Calu3 (cell line): ENCODE measurements at regions of chr1 and their contacts with region 1.

Region 1: GRCh38 chr1:87787551-87787950 is 458.9 kb downstream of the LMO4 start:
- DNase-seq: no peak
- H3K4me3 Mint-ChIP-seq: no peak overlapping the region
- H3K27ac Mint-ChIP-seq: peak overlapping the region; percentile 47
- H3K4me1 Mint-ChIP-seq: peaks cover 70% of the 10 kb centered on the region
- H3K27me3 Mint-ChIP-seq: no peaks in the 10 kb centered on the region
- CTCF ChIP-seq: peak; percentile 37

Region 2: GRCh38 chr1:87754036-87754603 is 33.4 kb before region 1 on chr1:
- CTCF ChIA-PET with region 1: no interaction called
- intact Hi-C with region 1: no loop called
- DNase-seq: no peak
- H3K4me3 Mint-ChIP-seq: no peak overlapping the region
- H3K27ac Mint-ChIP-seq: no peak overlapping the region
- H3K4me1 Mint-ChIP-seq: peaks cover 9% of the 10 kb centered on the region
- H3K27me3 Mint-ChIP-seq: no peaks in the 10 kb centered on the region
- CTCF ChIP-seq: no peak

Region 3: DNA sequence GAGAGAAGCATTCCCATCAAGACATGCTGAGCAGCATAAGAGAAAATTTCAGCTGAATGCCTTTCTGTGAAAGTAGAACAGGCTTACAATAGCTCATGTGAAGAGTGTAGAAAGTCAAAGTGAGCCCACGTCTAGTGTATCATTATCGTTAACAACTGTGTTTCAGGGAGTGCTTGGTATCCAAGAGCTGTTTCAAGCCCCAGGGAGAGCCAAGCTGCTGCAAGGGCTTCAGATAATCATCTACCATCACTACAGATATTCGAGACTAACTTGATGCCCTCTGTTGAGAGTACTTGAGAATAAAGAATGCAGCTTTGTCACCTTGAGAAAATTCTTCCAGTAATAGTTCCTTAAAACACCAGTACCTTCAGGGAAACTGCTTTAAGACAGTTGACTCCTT is 307.9 kb after region 1 on chr1:
- CTCF ChIA-PET with region 1: no interaction called
- intact Hi-C with region 1: no loop called
- DNase-seq: no peak
- H3K4me3 Mint-ChIP-seq: no peak overlapping the region
- H3K27ac Mint-ChIP-seq: no peak overlapping the region
- H3K4me1 Mint-ChIP-seq: no peaks in the 10 kb centered on the region
- H3K27me3 Mint-ChIP-seq: no peaks in the 10 kb centered on the region
- CTCF ChIP-seq: no peak

Region 4: DNA sequence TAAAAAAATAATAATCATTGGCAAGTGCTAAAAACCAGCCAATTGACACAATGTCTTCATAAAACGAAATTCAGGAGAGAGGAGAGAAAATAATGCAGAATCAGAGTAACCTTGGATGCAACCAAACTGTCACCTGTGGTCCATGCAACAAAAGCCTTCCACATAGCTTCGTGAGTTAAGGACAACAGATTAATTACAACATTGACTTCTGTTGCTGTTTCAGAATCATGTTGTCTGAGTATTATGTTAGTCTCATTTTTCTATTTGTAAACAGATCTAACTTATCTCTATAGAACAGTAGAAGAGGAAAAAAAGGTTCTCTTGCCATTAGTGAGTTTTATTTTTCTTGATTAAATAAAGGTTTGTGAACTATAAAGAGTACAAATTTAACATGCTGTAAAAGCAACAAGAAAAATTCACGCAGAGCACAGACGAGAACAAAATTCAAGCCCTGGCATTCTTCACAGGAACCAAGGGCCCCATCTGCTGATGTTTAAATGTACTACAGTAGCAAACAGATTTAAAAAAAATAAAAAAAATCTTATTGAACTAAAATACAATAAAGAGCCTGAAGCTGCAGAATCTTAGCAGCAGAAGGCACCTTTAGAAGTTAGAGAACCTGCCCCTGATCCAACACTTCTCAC is 515.4 kb after region 1 on chr1:
- CTCF ChIA-PET with region 1: no interaction called
- intact Hi-C with region 1: loop called (anchors 10 kb)
- DNase-seq: peak; percentile 21
- H3K4me3 Mint-ChIP-seq: no peak overlapping the region
- H3K27ac Mint-ChIP-seq: no peak overlapping the region
- H3K4me1 Mint-ChIP-seq: no peaks in the 10 kb centered on the region
- H3K27me3 Mint-ChIP-seq: no peaks in the 10 kb centered on the region
- CTCF ChIP-seq: peak; percentile 47